ENCODE measurements at regions of chr12 and their contacts with region 1.

Region 1: DNA sequence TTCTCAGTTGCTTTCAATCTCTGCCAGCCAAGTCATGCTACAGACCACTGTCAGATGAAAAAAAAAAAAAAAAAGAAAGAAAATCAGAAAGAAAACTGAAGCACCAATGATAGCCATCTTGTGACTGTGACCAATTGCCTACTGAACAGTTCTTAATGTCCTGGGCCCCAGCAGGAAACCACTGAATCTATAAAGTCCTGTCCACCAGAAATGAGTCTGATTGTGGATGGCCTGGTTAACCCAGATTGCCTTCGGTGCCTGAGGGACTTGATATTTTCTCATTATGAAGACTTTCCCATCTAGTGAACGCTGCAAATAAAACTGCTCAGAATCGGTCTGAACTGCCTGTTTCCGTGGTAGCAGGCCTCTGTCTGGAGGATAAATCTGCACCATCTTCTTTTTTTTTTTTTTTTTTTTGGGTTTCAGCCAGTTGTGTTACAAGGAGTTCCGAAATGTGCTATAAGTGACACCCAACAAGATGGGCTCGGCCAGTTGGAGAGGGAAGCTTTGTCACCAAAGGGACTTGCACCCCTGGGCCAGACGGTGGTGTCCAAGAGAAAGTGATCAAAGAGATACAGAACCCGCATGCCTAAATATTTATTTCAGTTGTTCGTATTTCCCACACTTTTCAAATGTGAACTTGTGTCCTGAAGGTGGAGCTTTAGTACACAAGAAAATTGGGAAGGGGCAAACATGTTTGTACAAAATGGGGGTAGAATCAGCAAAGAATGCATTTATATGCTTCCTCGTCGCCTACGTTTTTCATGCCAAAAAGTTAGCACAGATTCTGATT is 3.0 kb upstream of the PLXNC1 start:
- DNase-seq: no peak
- H3K4me3 ChIP-seq: no peak overlapping the region
- CTCF ChIP-seq: peak; percentile 31

Region 2: GRCh38 chr12:93292741-93293566 is 852.4 kb before region 1 on chr12:
- CTCF ChIA-PET with region 1: no interaction called
- POLR2A ChIA-PET with region 1: no interaction called
- DNase-seq: no peak
- H3K4me3 ChIP-seq: no peak overlapping the region
- CTCF ChIP-seq: no peak

Region 3: GRCh38 chr12:94133964-94134795 is 11.2 kb before region 1 on chr12:
- CTCF ChIA-PET with region 1: interaction called, 16 read pairs
- POLR2A ChIA-PET with region 1: no interaction called
- DNase-seq: peak; percentile 3
- H3K4me3 ChIP-seq: no peak overlapping the region
- CTCF ChIP-seq: peak; percentile 52

Region 4: GRCh38 chr12:94532490-94533422 is 387.4 kb after region 1 on chr12:
- CTCF ChIA-PET with region 1: interaction called, 60 read pairs
- POLR2A ChIA-PET with region 1: no interaction called
- DNase-seq: no peak
- H3K4me3 ChIP-seq: no peak overlapping the region
- CTCF ChIP-seq: peak; percentile 82